Psoas muscle (tissue), 8 donors: ENCODE measurements at regions of chr1 and their contacts with region 1.

Region 1: GRCh38 chr1:152459596-152460528 is 45.8 kb upstream of the CRNN start:
- DNase-seq: peak; percentile 70 to 78
- ATAC-seq: peak in 3 of 4 donors; percentile 37 to 59 (median 50)
- H3K4me3 ChIP-seq: peak overlapping the region; percentile 2
- H3K27ac ChIP-seq: no peak overlapping the region
- H3K4me1 ChIP-seq: no peaks in the 10 kb centered on the region
- H3K27me3 ChIP-seq: no peaks in the 10 kb centered on the region
- CTCF ChIP-seq: peak; percentile 59

Region 2: GRCh38 chr1:152052606-152053005 is 407.3 kb before region 1 on chr1:
- intact Hi-C with region 1: loop called (anchors 5 kb)
- DNase-seq: peak; percentile 85 to 90
- ATAC-seq: peak; percentile 63 to 77 (median 67)
- H3K4me3 ChIP-seq: no peak overlapping the region
- H3K27ac ChIP-seq: no peak overlapping the region
- H3K4me1 ChIP-seq: no peaks in the 10 kb centered on the region
- H3K27me3 ChIP-seq: peaks cover 0 to 3% (median 0%) of the 10 kb centered on the region in 3 donors
- CTCF ChIP-seq: peak; percentile 88

Region 3: GRCh38 chr1:152141974-152142584 is 317.8 kb before region 1 on chr1:
- intact Hi-C with region 1: loop called in 1 of 2 experiments (anchors 5 kb)
- DNase-seq: peak in 1 of 2 donors; percentile 26
- ATAC-seq: no peak
- H3K4me3 ChIP-seq: no peak overlapping the region
- H3K27ac ChIP-seq: no peak overlapping the region
- H3K4me1 ChIP-seq: no peaks in the 10 kb centered on the region
- H3K27me3 ChIP-seq: no peaks in the 10 kb centered on the region
- CTCF ChIP-seq: peak; percentile 45